Natural killer cell (primary cell): ENCODE measurements at regions of chr9 and their contacts with region 1.

Region 1: DNA sequence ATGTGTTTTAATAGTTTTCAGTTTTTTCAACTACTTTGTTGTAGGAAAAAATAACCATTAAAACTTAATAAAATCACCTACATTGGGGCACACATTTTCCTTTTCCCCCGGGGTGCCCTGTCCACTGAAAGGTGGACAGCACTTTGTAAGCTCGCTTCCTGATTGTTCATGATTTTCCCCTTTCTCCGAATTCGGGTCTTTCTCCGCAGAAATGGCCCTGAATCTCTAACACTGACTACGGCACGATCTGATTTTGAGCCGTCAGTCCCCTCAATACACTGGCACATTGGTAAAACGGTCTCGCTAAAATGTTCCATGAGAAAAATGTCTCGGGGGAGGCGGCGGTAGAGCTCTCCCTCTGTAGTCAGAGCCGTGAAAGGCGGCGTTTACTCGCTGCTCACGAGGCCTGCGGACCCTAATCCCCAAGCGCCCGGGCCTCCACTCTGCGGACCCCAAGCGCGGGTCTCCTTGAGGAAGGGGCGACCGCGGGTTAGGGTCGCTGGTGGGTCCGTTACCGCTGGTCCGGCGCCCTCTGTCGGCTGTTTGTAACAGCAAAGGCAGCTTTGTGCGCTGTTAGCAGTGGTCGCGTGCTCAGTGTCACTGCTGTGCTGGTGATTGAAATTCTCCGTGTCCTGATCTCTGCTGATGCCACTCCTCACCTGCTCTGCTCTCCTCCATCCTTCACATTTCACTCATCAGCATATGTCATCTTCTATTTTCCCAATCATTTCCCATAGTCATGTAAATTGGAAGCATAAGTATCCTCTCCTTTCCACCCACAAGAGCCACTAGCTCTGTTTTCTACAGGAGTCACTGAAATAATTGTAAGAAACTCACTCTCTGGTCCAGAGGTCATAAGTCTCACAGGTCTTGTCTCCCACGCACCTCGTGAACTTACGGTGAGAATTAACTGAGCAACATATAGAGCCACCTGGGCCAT is 10.8 kb upstream of the IFNA2 start:
- DNase-seq: peak; percentile 47 to 77
- ATAC-seq: peak; percentile 65 to 84 (median 77)
- H3K4me3 ChIP-seq: peak overlapping the region; percentile 15
- H3K4me3 Mint-ChIP-seq: peak overlapping the region; percentile 56
- H3K27ac ChIP-seq: no peak overlapping the region
- H3K27ac Mint-ChIP-seq: peak overlapping the region in 1 of 2 donors; percentile 14
- H3K4me1 ChIP-seq: peaks cover 8% of the 10 kb centered on the region
- H3K4me1 Mint-ChIP-seq: peaks cover 10% of the 10 kb centered on the region in 2 donors
- H3K27me3 ChIP-seq: peaks cover 27% of the 10 kb centered on the region
- H3K27me3 Mint-ChIP-seq: peaks cover 56 to 79% of the 10 kb centered on the region in 2 donors
- CTCF ChIP-seq: peak; percentile 75

Region 2: GRCh38 chr9:21326526-21327139 is 69.4 kb before region 1 on chr9:
- intact Hi-C with region 1: loop called (anchors 1 kb)
- DNase-seq: peak in 1 of 2 donors; percentile 76
- ATAC-seq: peak; percentile 71 to 93 (median 86)
- H3K4me3 ChIP-seq: no peak overlapping the region
- H3K4me3 Mint-ChIP-seq: no peak overlapping the region
- H3K27ac ChIP-seq: no peak overlapping the region
- H3K27ac Mint-ChIP-seq: peak overlapping the region in 1 of 2 donors; percentile 33
- H3K4me1 ChIP-seq: no peaks in the 10 kb centered on the region
- H3K4me1 Mint-ChIP-seq: peaks cover 47 to 58% of the 10 kb centered on the region in 2 donors
- H3K27me3 ChIP-seq: no peaks in the 10 kb centered on the region
- H3K27me3 Mint-ChIP-seq: no peaks in the 10 kb centered on the region
- CTCF ChIP-seq: peak; percentile 82